Posterior cingulate gyrus (tissue), 11 donors: ENCODE measurements at regions of chr20 and their contacts with region 1.

Region 1: DNA sequence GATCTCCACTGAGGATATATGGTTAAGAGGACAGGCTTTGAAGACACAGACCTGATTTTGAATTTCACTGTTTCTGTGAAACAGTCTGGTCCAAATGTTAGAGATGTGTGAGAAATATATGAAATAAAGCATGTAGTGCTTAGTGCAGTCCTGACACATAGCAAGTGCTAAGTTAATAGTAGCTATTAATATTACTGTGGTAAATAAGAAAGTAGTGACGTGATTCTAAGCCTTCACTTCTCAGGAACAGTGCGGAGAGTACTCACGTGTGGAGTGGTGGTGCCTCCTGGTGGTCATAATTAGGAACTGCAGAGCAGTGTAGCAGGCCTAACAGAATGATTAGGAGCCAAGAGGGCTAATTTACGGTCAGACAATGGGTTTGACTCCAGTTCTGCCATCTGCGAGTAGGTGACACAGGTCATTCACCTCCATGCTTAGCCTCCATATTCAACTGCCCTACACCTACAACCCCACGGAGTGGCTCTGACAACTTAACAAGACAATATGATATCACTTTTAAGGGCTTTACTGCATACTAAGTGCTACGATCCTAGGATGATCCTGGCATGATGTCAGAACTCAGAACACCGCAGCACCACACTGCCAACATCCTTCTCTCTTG is 106.2 kb downstream of the JPH2 start:
- DNase-seq: peak in 8 of 10 donors; percentile 44 to 94 (median 80)

Region 2: DNA sequence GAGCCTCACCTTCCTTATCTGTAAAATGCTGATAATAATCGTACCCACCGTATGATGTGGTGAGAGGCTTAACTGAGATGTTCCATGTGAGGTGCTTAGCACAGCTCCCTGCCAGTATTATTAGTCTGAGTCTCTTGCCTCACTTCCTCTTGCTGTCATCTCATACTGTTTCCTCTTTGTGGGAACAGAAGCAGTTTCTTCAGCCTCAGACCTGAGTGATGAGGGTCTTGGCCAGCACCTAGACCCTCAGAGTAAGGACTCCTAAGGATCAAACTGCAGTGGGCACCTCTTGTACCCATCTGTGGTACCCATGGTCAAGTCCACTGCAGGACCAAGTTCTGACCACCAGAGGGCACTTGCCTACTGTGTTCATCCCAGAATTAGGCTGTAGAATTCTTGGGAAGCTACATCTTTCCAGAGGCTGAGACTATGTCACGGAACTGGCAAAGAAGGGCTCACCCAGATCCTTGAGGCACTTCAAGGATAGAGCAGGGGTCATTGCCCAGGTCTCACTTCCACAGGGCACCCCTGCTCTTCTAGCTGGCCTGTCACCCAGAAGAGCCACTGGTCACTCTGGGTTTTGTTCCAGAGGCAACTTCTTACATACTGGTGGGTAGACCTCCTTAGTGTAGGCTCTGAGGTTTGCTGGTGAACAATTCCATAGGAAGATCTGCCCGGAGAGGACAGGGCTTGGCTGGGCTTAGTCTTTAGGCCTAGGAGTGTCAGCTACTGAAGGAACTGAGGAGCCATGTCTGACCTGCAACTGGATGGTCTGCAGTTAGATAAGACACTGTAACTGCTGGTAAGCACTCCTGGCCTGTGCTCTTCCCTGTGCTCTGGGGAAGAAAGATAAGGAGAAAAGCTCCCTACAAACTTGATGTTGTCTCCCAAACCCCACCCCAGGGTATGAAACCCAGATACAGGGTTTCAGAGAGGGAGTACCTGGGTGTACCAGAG is 542.6 kb before region 1 on chr20:
- intact Hi-C with region 1: loop called (anchors 10 kb)
- DNase-seq: peak; percentile 63 to 94 (median 84)

Region 3: GRCh38 chr20:43749734-43750294 is 330.9 kb before region 1 on chr20:
- intact Hi-C with region 1: loop called (anchors 1 kb)
- DNase-seq: peak; percentile 48 to 96 (median 88)

Region 4: GRCh38 chr20:44056010-44056698 is 24.6 kb before region 1 on chr20:
- intact Hi-C with region 1: loop called (anchors 1 kb)
- DNase-seq: peak in 6 of 10 donors; percentile 32 to 92 (median 57)